ENCODE measurements at regions of chr6 and their contacts with region 1.

Region 1: DNA sequence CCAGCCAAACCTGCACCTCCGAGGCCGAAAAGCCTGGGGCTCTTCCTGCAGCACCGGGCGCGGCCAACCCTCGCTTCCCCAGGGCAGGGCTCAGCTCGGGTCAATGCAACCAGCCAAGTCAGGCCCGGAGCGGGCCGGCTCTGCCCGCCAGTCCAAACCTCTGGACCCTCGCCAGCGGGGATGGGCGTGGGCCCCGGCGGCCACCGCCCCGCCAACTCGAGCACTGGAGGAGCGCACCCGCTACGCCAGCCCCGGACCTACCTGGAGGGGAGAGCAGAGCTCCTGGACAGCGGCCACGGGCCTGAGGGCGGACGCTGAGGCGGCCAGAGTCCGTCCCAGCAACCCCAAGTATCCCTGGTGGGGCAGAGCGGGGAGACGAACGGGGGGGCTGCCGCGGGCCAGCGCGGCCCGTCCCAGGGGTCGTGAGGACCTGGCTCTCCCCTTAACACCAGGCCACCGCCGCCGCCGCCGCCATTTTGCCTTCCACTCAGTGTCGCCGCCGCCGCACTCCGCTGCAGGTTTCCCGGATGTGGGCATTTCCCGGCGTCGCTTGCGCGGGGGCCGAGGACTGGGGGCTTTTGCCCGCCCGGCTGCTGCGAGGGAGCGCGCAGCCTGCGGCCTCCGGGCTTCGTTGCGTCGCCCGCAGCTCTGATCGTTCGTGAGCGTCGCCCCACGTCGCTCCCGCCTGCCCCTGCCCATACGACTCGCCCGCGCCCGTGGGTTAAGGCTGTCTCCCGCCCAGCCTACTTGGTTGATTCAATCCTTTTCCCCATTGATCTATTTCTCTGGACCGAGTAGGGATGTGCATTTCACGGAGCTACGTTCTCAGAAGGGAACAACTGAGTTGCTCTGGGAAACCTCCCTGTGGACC is at the start of gene LATS1:
- DNase-seq: peak; percentile 97
- ATAC-seq: peak; percentile 93
- H3K4me3 Mint-ChIP-seq: peak within 1 kb of the TSS; percentile 88
- H3K27ac Mint-ChIP-seq: peak within 1 kb of the TSS; percentile 98
- H3K4me1 Mint-ChIP-seq: peaks cover 25% of the 10 kb centered on the region
- H3K27me3 Mint-ChIP-seq: no peaks in the 10 kb centered on the region
- total RNA-seq, gene LATS1: 21.2 to 23.5 TPM

Region 2: DNA sequence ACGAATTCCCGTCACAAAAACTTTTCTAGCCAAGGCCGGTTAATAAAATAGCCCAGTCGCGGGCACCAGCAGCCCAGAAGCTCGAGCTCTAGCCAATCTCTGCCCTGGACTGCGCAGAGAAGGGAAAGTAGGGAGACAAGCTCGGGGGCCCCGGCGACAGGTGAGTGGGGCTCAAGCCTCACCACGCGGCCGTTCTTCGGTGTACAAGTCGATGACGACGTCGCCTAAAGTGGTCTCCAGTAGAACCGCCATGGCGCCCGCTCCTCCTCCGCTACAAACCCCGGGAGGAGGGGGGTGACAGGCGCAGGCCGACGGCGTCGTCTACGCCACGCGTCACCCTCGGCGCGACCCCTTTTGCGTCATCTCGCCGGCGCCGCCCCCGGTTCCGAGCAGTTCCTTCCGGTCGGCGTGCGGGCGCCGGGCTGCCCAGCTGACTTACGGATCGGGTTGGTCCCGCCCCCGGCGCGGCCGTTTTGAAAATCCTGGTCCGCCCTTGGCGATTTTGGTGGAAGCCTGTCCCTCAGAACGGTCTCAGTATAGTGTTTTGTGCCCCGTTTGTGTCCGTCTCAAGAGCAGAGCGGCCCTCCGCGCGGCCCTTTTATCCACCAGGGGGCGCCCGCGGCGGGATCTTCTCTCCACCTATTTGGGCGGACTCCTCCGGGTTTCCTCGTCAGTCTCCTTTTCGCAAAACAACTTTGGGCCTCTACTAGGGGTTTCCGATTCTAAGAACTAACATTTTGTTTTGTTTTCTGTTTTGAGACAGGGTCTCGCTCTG is 171.9 kb before region 1 on chr6 and contains the start of gene PPIL4:
- CTCF ChIA-PET with region 1: interaction called, 4 read pairs
- POLR2A ChIA-PET with region 1: interaction called, 5 read pairs
- intact Hi-C with region 1: loop called (anchors 1 kb)
- DNase-seq: peak; percentile 98
- ATAC-seq: peak; percentile 85
- H3K4me3 Mint-ChIP-seq: peak within 1 kb of the TSS; percentile 97
- H3K27ac Mint-ChIP-seq: peak within 1 kb of the TSS; percentile 98
- H3K4me1 Mint-ChIP-seq: peaks cover 42% of the 10 kb centered on the region
- H3K27me3 Mint-ChIP-seq: no peaks in the 10 kb centered on the region
- total RNA-seq, gene PPIL4: 22.6 to 26.8 TPM

Region 3: DNA sequence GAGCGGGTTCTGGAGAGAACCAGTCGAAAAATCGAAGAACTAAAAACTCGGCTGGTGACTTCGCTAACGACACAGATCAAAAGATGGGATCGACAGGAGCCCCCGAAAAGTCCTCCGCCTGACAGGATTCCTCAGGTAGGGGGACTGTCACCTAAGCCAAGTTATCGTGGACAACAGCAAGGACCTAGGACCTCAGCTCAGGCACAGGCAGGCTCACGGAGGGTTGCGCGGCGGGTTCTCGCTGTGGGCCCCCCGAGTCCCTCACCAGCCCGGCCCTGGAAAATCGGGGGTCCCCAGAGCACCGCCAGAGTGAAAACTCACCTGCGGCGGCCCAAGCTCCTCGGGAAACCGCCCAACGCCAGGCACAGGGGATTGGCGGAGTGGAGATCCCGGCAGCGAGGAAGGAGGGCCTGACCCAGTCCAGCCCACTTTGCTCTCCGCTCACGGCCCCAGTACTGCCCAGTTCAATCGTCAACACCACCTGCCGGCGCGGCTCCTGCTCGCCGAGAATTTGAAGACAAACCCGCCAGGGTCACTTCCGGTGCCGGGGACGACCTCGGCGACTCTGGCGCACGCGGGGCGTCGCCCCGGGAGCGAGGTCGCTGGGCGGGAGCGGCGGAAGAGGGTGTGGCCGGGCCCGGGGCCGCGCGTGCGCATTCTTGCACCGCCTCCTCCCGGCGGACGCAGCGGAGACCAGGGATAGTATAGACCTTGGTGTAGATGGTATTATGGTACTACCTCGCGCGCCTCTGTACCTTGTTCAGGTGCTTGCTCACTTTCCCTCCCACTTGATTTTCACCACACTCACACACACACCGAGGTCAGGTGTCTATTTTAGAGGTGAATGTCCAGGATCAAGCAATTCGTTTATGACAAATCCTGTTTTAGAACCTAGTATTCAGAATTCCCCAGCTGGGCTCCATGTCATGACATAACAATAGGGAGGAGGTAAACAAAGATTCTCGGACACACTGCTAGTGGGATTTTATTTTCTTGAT is 69.4 kb before region 1 on chr6 and contains the start of gene KATNA1:
- CTCF ChIA-PET with region 1: no interaction called
- POLR2A ChIA-PET with region 1: no interaction called
- intact Hi-C with region 1: loop called (anchors 1 to 2 kb)
- DNase-seq: peak; percentile 95
- ATAC-seq: peak; percentile 96
- H3K4me3 Mint-ChIP-seq: peak within 1 kb of the TSS; percentile 90
- H3K27ac Mint-ChIP-seq: peak within 1 kb of the TSS; percentile 87
- H3K4me1 Mint-ChIP-seq: peaks cover 20% of the 10 kb centered on the region
- H3K27me3 Mint-ChIP-seq: no peaks in the 10 kb centered on the region
- total RNA-seq, gene KATNA1: 18.1 to 21.6 TPM

Region 4: GRCh38 chr6:149686230-149686629 is 31.6 kb before region 1 on chr6:
- CTCF ChIA-PET with region 1: interaction called, 3 read pairs
- POLR2A ChIA-PET with region 1: no interaction called
- intact Hi-C with region 1: loop called (anchors 2 kb)
- DNase-seq: no peak
- ATAC-seq: no peak
- H3K4me3 Mint-ChIP-seq: no peak overlapping the region
- H3K27ac Mint-ChIP-seq: peak overlapping the region; percentile 5
- H3K4me1 Mint-ChIP-seq: peaks cover 28% of the 10 kb centered on the region
- H3K27me3 Mint-ChIP-seq: no peaks in the 10 kb centered on the region

Region 5: DNA sequence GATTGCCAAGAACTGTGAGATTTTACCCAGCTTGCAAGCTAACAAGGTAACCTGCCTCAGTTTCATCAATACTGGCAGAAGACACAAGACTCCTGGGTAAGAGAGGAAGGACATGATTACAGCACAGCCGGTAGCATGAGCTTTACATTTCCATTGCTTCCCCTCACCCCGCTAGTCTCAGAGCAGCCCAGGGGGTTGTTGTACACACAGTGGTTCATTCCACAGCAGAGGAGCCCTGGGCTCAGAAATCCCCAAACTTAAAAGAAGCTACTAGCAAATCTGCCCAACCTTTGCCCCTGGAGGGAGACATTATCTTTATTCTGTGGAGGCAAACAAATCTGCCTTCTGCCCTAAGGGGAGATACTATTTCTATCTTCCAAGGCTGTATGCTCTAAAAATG is 1130.6 kb after region 1 on chr6:
- CTCF ChIA-PET with region 1: no interaction called
- POLR2A ChIA-PET with region 1: no interaction called
- intact Hi-C with region 1: no loop called
- DNase-seq: no peak
- ATAC-seq: no peak
- H3K4me3 Mint-ChIP-seq: no peak overlapping the region
- H3K27ac Mint-ChIP-seq: no peak overlapping the region
- H3K4me1 Mint-ChIP-seq: peaks cover 6% of the 10 kb centered on the region
- H3K27me3 Mint-ChIP-seq: peaks cover 15% of the 10 kb centered on the region

Measured in activated CD4-positive, alpha-beta T cell treated with anti-CD3 and anti-CD28 coated beads for 36 hours (primary cell).